Naive thymus-derived CD4-positive, alpha-beta T cell (primary cell): ENCODE measurements at regions of chr19 and their contacts with region 1.

Region 1: GRCh38 chr19:45038931-45039893 is at the start of gene CLASRP:
- DNase-seq: peak; percentile 73 to 92 (median 85)
- ATAC-seq: peak; percentile 96
- H3K4me3 ChIP-seq: peak within 1 kb of the TSS; percentile 85
- H3K4me3 Mint-ChIP-seq: peak within 1 kb of the TSS; percentile 89 to 100 (median 99)
- H3K27ac ChIP-seq: peak within 1 kb of the TSS; percentile 100
- H3K27ac Mint-ChIP-seq: peak within 1 kb of the TSS; percentile 90 to 99 (median 98)
- H3K4me1 ChIP-seq: peaks cover 15 to 24% of the 10 kb centered on the region in 2 donors
- H3K4me1 Mint-ChIP-seq: peaks cover 26 to 43% (median 33%) of the 10 kb centered on the region in 7 donors
- H3K27me3 ChIP-seq: no peaks in the 10 kb centered on the region
- H3K27me3 Mint-ChIP-seq: no peaks in the 10 kb centered on the region
- total RNA-seq, gene CLASRP: 94.7 to 185 (median 163) TPM

Region 2: DNA sequence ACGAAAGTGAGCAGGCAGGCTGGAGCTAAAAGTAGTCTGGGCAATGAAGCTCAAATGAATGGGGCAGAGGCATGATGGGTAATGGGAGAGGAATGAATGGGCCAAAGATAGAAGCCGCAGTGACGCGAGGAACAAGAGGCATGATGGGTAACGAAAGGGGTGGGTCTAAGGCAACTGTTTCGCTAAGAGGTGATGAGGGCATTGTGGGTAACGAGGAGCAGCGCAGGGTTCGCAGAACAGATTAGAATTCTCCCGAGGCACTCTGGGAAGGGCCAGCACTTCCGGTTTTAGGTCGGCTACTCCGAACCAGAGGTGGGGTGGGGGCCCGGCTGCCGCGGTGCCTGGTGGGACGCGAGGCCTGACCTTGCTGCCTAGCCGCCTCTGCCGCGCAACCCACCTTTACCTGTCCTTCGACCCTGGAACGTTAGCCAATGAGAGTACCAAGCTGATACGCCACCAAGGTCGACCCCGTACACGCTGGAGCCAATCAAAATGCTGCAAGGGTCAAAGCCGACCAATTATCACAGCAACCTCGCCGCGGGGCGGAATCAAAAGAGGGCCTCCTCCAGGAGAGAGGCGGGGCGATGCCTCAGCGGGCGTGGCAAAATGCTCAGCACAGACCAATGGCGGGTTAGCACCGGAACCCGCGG is 148.7 kb before region 1 on chr19:
- CTCF ChIA-PET with region 1: no interaction called
- POLR2A ChIA-PET with region 1: no interaction called
- intact Hi-C with region 1: loop called in 1 of 2 experiments (anchors 2 kb)
- DNase-seq: peak; percentile 97 to 100 (median 100)
- ATAC-seq: peak; percentile 86
- H3K4me3 ChIP-seq: peak overlapping the region; percentile 69
- H3K4me3 Mint-ChIP-seq: peak overlapping the region; percentile 83 to 93 (median 89)
- H3K27ac ChIP-seq: peak overlapping the region; percentile 84
- H3K27ac Mint-ChIP-seq: peak overlapping the region; percentile 90 to 96 (median 94)
- H3K4me1 ChIP-seq: peaks cover 10 to 20% of the 10 kb centered on the region in 2 donors
- H3K4me1 Mint-ChIP-seq: peaks cover 18 to 44% (median 35%) of the 10 kb centered on the region in 7 donors
- H3K27me3 ChIP-seq: no peaks in the 10 kb centered on the region
- H3K27me3 Mint-ChIP-seq: no peaks in the 10 kb centered on the region

Region 3: DNA sequence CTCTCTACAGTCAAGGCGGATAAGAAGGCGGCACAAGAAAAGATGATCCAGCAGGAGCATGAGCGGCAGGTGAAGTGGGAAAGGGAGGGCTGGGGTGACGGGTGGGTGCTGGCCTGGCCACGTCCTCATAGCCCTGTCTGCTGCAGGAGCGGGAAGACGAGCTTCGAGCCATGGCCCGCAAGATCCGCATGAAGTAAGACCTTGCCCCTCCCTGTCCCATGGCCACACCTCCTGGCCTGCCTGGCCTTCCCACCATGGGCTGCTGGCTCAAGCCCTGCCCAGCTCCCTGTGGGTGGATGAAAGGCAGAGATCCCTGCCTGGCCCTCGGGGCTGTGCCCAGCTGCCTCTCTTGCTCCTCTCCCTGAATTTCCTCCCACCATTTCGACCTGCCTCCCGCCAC is 29.8 kb after region 1 on chr19:
- CTCF ChIA-PET with region 1: no interaction called
- POLR2A ChIA-PET with region 1: no interaction called
- intact Hi-C with region 1: no loop called
- DNase-seq: no peak
- ATAC-seq: no peak
- H3K4me3 ChIP-seq: no peak overlapping the region
- H3K4me3 Mint-ChIP-seq: no peak overlapping the region
- H3K27ac ChIP-seq: no peak overlapping the region
- H3K27ac Mint-ChIP-seq: peak overlapping the region in 2 of 9 donors; percentile 43 to 62
- H3K4me1 ChIP-seq: no peaks in the 10 kb centered on the region
- H3K4me1 Mint-ChIP-seq: no peaks in the 10 kb centered on the region
- H3K27me3 ChIP-seq: no peaks in the 10 kb centered on the region
- H3K27me3 Mint-ChIP-seq: no peaks in the 10 kb centered on the region

Region 4: DNA sequence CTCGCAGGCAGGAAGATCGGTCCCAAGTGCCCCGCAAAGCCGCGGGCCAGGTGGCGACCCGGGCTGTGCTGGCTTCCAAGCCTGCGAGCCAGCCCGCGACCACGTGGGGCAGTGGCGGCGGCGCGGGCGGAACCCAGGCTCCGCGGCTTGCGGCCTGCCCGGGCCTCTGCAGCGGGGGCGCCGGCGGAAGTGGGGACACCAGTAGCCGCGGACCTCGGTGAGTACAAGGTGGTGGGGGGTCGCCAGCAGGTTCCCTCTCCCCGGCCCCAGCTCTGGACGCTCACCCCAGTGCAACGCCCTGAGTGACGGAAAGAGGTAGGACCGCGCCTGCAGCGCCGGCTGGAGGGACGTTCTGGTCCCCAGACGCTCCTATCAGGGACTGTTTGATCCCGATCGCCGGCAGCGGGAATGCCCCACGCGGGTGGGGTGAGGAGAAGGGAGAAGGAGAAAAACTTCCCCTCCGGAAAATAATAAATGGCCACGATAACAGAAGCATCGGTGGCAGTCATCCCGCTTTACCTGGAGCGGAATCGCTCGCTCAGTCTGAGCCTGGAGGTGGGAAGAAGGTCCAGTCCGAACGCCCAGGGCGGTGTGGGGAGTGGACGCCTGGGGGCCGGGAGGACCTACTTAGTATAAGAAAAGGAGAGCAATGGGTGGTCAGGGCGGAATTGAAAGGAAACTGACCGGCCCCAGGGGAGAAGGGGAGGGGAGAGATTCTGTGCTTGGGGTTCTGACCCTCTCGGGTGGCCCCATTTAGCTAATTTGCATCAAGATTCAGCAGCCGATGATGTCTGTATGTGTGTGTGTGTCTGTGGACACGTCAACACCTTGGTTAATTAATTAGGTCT is 40.1 kb after region 1 on chr19 and contains the start of gene GEMIN7:
- CTCF ChIA-PET with region 1: no interaction called
- POLR2A ChIA-PET with region 1: interaction called, 5 read pairs
- intact Hi-C with region 1: loop called (anchors 1 kb)
- DNase-seq: peak; percentile 60 to 90 (median 75)
- ATAC-seq: peak; percentile 76
- H3K4me3 ChIP-seq: peak within 1 kb of the TSS; percentile 99
- H3K4me3 Mint-ChIP-seq: peak within 1 kb of the TSS; percentile 87 to 99 (median 94)
- H3K27ac ChIP-seq: peak within 1 kb of the TSS; percentile 86
- H3K27ac Mint-ChIP-seq: peak within 1 kb of the TSS; percentile 79 to 94 (median 84)
- H3K4me1 ChIP-seq: peaks cover 22 to 31% of the 10 kb centered on the region in 2 donors
- H3K4me1 Mint-ChIP-seq: peaks cover 32 to 53% (median 48%) of the 10 kb centered on the region in 7 donors
- H3K27me3 ChIP-seq: no peaks in the 10 kb centered on the region
- H3K27me3 Mint-ChIP-seq: no peaks in the 10 kb centered on the region
- total RNA-seq, gene GEMIN7: 4.9 to 31.6 (median 16.6) TPM

Region 5: GRCh38 chr19:45150741-45151303 is 111.6 kb after region 1 on chr19:
- CTCF ChIA-PET with region 1: no interaction called
- POLR2A ChIA-PET with region 1: no interaction called
- intact Hi-C with region 1: no loop called
- DNase-seq: no peak
- ATAC-seq: no peak
- H3K4me3 ChIP-seq: no peak overlapping the region
- H3K4me3 Mint-ChIP-seq: peak overlapping the region in 3 of 10 donors; percentile 34 to 86 (median 48)
- H3K27ac ChIP-seq: no peak overlapping the region
- H3K27ac Mint-ChIP-seq: no peak overlapping the region
- H3K4me1 ChIP-seq: peaks cover 7 to 21% of the 10 kb centered on the region in 2 donors
- H3K4me1 Mint-ChIP-seq: peaks cover 9 to 28% (median 22%) of the 10 kb centered on the region in 7 donors
- H3K27me3 ChIP-seq: no peaks in the 10 kb centered on the region
- H3K27me3 Mint-ChIP-seq: peaks cover 0 to 30% (median 5%) of the 10 kb centered on the region in 5 donors

Region 6: GRCh38 chr19:45250832-45251451 is 211.7 kb after region 1 on chr19 and contains the start of gene MARK4:
- CTCF ChIA-PET with region 1: no interaction called
- POLR2A ChIA-PET with region 1: interaction called, 3 read pairs
- intact Hi-C with region 1: loop called in 1 of 2 experiments (anchors 1 kb)
- DNase-seq: peak in 8 of 9 donors; percentile 32 to 70 (median 51)
- ATAC-seq: peak; percentile 80
- H3K4me3 ChIP-seq: peak within 1 kb of the TSS; percentile 63
- H3K4me3 Mint-ChIP-seq: peak within 1 kb of the TSS; percentile 87 to 96 (median 94)
- H3K27ac ChIP-seq: peak within 1 kb of the TSS; percentile 72
- H3K27ac Mint-ChIP-seq: peak within 1 kb of the TSS; percentile 28 to 90 (median 81)
- H3K4me1 ChIP-seq: peaks cover 19 to 20% of the 10 kb centered on the region in 2 donors
- H3K4me1 Mint-ChIP-seq: peaks cover 23 to 42% (median 35%) of the 10 kb centered on the region in 7 donors
- H3K27me3 ChIP-seq: no peaks in the 10 kb centered on the region
- H3K27me3 Mint-ChIP-seq: peaks cover 0 to 5% (median 0%) of the 10 kb centered on the region in 5 donors
- total RNA-seq, gene MARK4: 22.4 to 39.2 (median 25.5) TPM